ENCODE measurements at regions of chr3 and their contacts with region 1.

Region 1: GRCh38 chr3:157088601-157089454 is 71.1 kb downstream of the CCNL1 start:
- DNase-seq: peak; percentile 88 to 96 (median 93)
- H3K4me3 ChIP-seq: peak overlapping the region; percentile 72
- H3K4me3 Mint-ChIP-seq: peak overlapping the region; percentile 84 to 95 (median 88)
- H3K27ac ChIP-seq: peak overlapping the region; percentile 68
- H3K27ac Mint-ChIP-seq: peak overlapping the region; percentile 97 to 99 (median 98)
- H3K4me1 ChIP-seq: peaks cover 20% of the 10 kb centered on the region
- H3K4me1 Mint-ChIP-seq: peaks cover 27 to 56% (median 49%) of the 10 kb centered on the region in 3 donors
- H3K27me3 ChIP-seq: no peaks in the 10 kb centered on the region
- H3K27me3 Mint-ChIP-seq: no peaks in the 10 kb centered on the region

Region 2: GRCh38 chr3:156554842-156555687 is 533.8 kb before region 1 on chr3 and contains the start of gene SSR3:
- CTCF ChIA-PET with region 1: interaction called, 10 read pairs
- POLR2A ChIA-PET with region 1: interaction called, 6 read pairs
- DNase-seq: peak; percentile 98 to 99 (median 99)
- H3K4me3 ChIP-seq: peak within 1 kb of the TSS; percentile 92
- H3K4me3 Mint-ChIP-seq: peak within 1 kb of the TSS; percentile 96 to 99 (median 97)
- H3K27ac ChIP-seq: peak within 1 kb of the TSS; percentile 91
- H3K27ac Mint-ChIP-seq: peak within 1 kb of the TSS; percentile 85 to 98 (median 96)
- H3K4me1 ChIP-seq: peaks cover 29% of the 10 kb centered on the region
- H3K4me1 Mint-ChIP-seq: peaks cover 46 to 56% (median 55%) of the 10 kb centered on the region in 3 donors
- H3K27me3 ChIP-seq: no peaks in the 10 kb centered on the region
- H3K27me3 Mint-ChIP-seq: no peaks in the 10 kb centered on the region
- total RNA-seq, gene SSR3: 171 to 175 TPM

Region 3: DNA sequence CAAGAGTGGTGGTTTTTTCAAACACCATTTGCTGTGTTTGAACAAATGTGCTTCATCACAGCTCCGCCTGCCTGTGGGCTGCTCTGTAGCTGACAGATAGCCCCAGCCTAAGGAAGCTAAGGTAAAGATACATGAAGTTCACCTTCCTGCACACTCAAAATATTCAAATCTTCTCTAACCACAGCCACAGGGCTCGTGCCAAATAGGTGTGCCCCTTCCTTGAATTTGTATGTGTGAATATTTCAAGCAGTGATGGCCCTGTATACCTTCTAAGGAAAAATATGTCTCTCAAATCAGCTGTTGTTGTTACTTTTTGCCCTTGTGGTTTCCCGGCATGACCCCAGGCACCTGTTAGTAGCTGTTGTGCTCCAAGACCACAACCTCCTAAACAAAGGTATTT is 21.7 kb before region 1 on chr3:
- CTCF ChIA-PET with region 1: interaction called, 4 read pairs
- POLR2A ChIA-PET with region 1: interaction called, 11 read pairs
- DNase-seq: peak; percentile 12 to 78 (median 46)
- H3K4me3 ChIP-seq: no peak overlapping the region
- H3K4me3 Mint-ChIP-seq: peak overlapping the region in 6 of 7 donors; percentile 49 to 84 (median 72)
- H3K27ac ChIP-seq: no peak overlapping the region
- H3K27ac Mint-ChIP-seq: peak overlapping the region; percentile 43 to 95 (median 94)
- H3K4me1 ChIP-seq: peaks cover 23% of the 10 kb centered on the region
- H3K4me1 Mint-ChIP-seq: peaks cover 51 to 56% (median 53%) of the 10 kb centered on the region in 3 donors
- H3K27me3 ChIP-seq: no peaks in the 10 kb centered on the region
- H3K27me3 Mint-ChIP-seq: peaks cover 0 to 2% of the 10 kb centered on the region in 2 donors

Region 4: GRCh38 chr3:157103280-157103679 is 14.5 kb after region 1 on chr3:
- CTCF ChIA-PET with region 1: interaction called, 14 read pairs
- POLR2A ChIA-PET with region 1: interaction called, 3 read pairs
- DNase-seq: no peak
- H3K4me3 ChIP-seq: no peak overlapping the region
- H3K4me3 Mint-ChIP-seq: peak overlapping the region in 1 of 7 donors; percentile 24
- H3K27ac ChIP-seq: no peak overlapping the region
- H3K27ac Mint-ChIP-seq: peak overlapping the region; percentile 38 to 83 (median 68)
- H3K4me1 ChIP-seq: peaks cover 16% of the 10 kb centered on the region
- H3K4me1 Mint-ChIP-seq: peaks cover 25 to 33% (median 30%) of the 10 kb centered on the region in 3 donors
- H3K27me3 ChIP-seq: no peaks in the 10 kb centered on the region
- H3K27me3 Mint-ChIP-seq: no peaks in the 10 kb centered on the region

Region 5: GRCh38 chr3:157130467-157131251 is 41.8 kb after region 1 on chr3:
- CTCF ChIA-PET with region 1: interaction called, 28 read pairs
- POLR2A ChIA-PET with region 1: interaction called, 7 read pairs
- DNase-seq: peak; percentile 62 to 87 (median 80)
- H3K4me3 ChIP-seq: peak overlapping the region; percentile 15
- H3K4me3 Mint-ChIP-seq: peak overlapping the region; percentile 13 to 91 (median 76)
- H3K27ac ChIP-seq: peak overlapping the region; percentile 68
- H3K27ac Mint-ChIP-seq: peak overlapping the region; percentile 96 to 98 (median 97)
- H3K4me1 ChIP-seq: peaks cover 59% of the 10 kb centered on the region
- H3K4me1 Mint-ChIP-seq: peaks cover 75 to 96% (median 90%) of the 10 kb centered on the region in 3 donors
- H3K27me3 ChIP-seq: no peaks in the 10 kb centered on the region
- H3K27me3 Mint-ChIP-seq: no peaks in the 10 kb centered on the region

Region 6: GRCh38 chr3:157166561-157166960 is 77.7 kb after region 1 on chr3:
- CTCF ChIA-PET with region 1: no interaction called
- POLR2A ChIA-PET with region 1: no interaction called
- DNase-seq: no peak
- H3K4me3 ChIP-seq: no peak overlapping the region
- H3K4me3 Mint-ChIP-seq: no peak overlapping the region
- H3K27ac ChIP-seq: no peak overlapping the region
- H3K27ac Mint-ChIP-seq: peak overlapping the region in 1 of 8 donors; percentile 39
- H3K4me1 ChIP-seq: no peaks in the 10 kb centered on the region
- H3K4me1 Mint-ChIP-seq: peaks cover under 1 to 4% (median 3%) of the 10 kb centered on the region in 3 donors
- H3K27me3 ChIP-seq: no peaks in the 10 kb centered on the region
- H3K27me3 Mint-ChIP-seq: peaks cover 0 to 3% of the 10 kb centered on the region in 2 donors